PC-3 (cell line): ENCODE measurements at regions of chr22 and their contacts with region 1.

Region 1: DNA sequence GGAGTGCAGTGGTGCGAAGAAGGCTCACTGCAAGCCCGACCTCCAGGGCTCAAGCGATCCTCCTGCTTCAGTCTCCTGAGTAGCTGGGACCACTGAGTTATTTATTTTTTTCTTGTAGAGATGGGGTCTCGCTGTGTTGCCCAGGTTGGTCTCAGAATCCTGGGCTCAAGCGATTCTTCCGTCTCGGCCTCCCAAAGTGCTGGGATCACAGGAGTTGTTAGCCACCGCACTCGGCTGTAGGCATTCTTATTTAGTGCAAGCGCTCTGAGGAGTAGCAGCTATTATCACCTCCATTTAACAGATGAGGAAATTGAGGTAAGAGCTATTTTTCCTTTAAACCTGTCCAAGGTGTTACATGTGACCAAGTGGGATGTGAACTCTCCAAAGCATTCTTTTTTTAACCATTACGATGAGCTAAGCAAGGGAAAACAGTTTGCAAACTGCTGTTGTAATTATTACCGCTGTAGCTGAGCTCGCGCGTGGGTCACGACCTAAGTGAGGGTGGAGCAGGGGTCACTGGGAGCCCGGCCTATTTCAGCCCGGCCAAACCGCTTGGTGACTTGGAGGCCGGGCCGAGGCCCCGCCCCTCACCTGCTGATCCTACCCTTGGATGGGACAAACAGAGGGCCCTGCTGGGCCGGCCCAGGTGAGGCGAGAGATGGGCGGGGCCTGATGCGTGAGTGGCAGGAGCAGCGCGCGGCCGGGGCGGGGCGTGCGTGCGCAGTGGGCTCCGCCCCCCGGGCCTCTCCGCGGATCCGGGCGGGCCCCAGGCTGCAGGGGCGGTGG is 449 bp upstream of the KREMEN1 start:
- DNase-seq: peak; percentile 89
- ATAC-seq: peak; percentile 93
- H3K4me3 ChIP-seq: peak overlapping the region; percentile 47; the same call in 1 of the 2 replicates
- H3K27ac ChIP-seq: no peak overlapping the region
- H3K4me1 ChIP-seq: peaks cover 10% of the 10 kb centered on the region; the same call in 1 of the 2 replicates
- H3K27me3 ChIP-seq: no peaks in the 10 kb centered on the region
- CTCF ChIP-seq: no peak

Region 2: GRCh38 chr22:28557184-28557583 is 515.2 kb before region 1 on chr22:
- CTCF ChIA-PET with region 1: no interaction called
- POLR2A ChIA-PET with region 1: no interaction called
- intact Hi-C with region 1: no loop called
- DNase-seq: no peak
- ATAC-seq: no peak
- H3K4me3 ChIP-seq: no peak overlapping the region
- H3K27ac ChIP-seq: no peak overlapping the region
- H3K4me1 ChIP-seq: peaks cover 7% of the 10 kb centered on the region; the same call in 1 of the 2 replicates
- H3K27me3 ChIP-seq: no peaks in the 10 kb centered on the region
- CTCF ChIP-seq: no peak

Region 3: GRCh38 chr22:29030016-29030622 is 42.3 kb before region 1 on chr22:
- CTCF ChIA-PET with region 1: no interaction called
- POLR2A ChIA-PET with region 1: no interaction called
- intact Hi-C with region 1: no loop called
- DNase-seq: peak; percentile 26
- ATAC-seq: peak; percentile 16
- H3K4me3 ChIP-seq: peak overlapping the region; percentile 72
- H3K27ac ChIP-seq: peak overlapping the region; percentile 86
- H3K4me1 ChIP-seq: peaks cover 30% of the 10 kb centered on the region
- H3K27me3 ChIP-seq: no peaks in the 10 kb centered on the region
- CTCF ChIP-seq: no peak

Region 4: DNA sequence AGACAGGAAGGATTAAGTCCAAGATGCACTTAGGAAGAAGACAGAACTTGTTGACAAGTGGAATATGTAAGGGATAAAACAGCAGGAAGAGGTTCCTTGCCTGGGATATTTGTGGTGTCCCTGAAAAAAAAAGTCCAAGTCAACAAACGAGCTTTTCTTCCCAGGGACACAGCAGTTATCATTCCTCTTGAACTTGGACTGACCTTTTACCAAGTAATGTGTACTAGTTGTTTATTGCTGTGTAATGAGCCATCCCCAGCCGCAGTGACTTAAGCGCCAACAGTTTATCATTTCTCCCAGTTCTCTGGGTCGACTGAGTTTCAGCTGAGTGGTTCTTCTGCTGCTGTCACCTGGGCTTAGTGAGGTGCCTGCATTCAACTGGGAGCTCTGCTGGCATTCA is 37.4 kb after region 1 on chr22:
- CTCF ChIA-PET with region 1: no interaction called
- POLR2A ChIA-PET with region 1: interaction called, 11 read pairs
- intact Hi-C with region 1: no loop called
- DNase-seq: no peak
- ATAC-seq: no peak
- H3K4me3 ChIP-seq: no peak overlapping the region
- H3K27ac ChIP-seq: no peak overlapping the region
- H3K4me1 ChIP-seq: peaks cover 24% of the 10 kb centered on the region
- H3K27me3 ChIP-seq: no peaks in the 10 kb centered on the region
- CTCF ChIP-seq: no peak

Region 5: DNA sequence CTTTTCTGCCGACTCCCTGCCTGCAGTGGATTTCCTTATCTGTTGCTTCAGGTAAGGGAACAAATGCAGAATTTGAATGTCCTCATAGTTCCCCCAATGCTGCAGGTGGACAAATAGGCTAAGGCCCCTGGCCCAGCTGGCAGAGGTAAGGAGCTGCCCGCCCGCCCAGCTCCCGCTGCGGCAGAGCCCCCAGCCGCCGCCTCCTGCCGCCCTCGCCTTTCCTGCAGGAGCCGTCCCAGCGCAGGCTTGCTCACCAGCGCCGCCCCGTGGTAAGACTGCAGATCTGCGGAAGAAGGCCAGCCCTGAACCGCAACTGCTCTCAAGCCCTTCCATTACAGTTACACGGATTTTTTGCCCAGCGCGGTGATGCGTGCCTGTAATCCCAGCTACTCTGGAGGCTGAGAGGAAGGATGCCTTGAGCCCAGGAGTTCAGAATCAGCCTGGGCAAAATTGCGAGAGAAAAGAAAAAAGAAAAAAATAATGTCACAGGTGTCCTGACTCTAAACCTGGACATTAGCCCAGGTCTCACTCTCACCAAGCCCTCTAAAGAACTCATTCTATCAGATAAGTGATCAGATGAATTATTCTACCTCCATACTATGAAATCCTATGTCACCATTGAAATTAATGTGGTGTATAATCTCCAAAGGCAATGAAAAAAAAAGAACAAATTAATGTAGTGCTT is 82.1 kb after region 1 on chr22:
- CTCF ChIA-PET with region 1: no interaction called
- POLR2A ChIA-PET with region 1: no interaction called
- intact Hi-C with region 1: loop called (anchors 10 kb)
- DNase-seq: peak; percentile 64
- ATAC-seq: peak; percentile 90
- H3K4me3 ChIP-seq: peak overlapping the region; percentile 26; the same call in 1 of the 2 replicates
- H3K27ac ChIP-seq: no peak overlapping the region
- H3K4me1 ChIP-seq: peaks cover 4% of the 10 kb centered on the region; the same call in 1 of the 2 replicates
- H3K27me3 ChIP-seq: no peaks in the 10 kb centered on the region
- CTCF ChIP-seq: peak; percentile 80